Activated T-helper 2 cell treated with anti-CD3 and anti-CD28 coated beads, Interferon-gamma antibody, Interleukin-2, Interleukin-4, amounts not matched to agents 10 μg/mL and 5 μg/mL and 100 μg/mL, durations not matched to agents 14 hours and 24 hours and 36 hours (primary cell): ENCODE measurements at regions of chr1 and their contacts with region 1.

Region 1: DNA sequence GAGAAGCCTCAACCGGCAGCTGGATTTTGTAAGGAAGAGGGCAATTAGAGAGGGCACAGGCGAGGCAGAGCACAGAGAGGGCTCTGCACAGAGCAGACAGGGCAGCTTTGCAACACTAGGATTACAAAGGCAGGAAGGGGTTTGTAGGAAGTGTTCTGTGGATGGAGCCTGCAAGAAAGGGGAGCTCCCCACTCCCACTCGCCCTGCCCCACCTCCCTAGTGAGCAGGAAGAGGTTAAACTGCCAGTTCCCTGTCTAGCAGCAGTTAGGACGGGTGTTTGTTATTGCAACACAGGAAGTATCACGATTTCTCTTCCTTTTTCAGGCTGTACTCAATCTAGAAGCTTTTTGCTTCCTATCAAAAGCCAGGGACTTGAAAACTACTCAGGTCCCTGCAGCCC is 63.3 kb upstream of the LRRC8D start:
- DNase-seq: peak; percentile 57
- H3K4me3 Mint-ChIP-seq: peak overlapping the region; percentile 77
- H3K27ac Mint-ChIP-seq: peak overlapping the region; percentile 93
- H3K4me1 Mint-ChIP-seq: peaks cover 82% of the 10 kb centered on the region
- H3K27me3 Mint-ChIP-seq: no peaks in the 10 kb centered on the region

Region 2: GRCh38 chr1:89538361-89538760 is 219.2 kb before region 1 on chr1:
- intact Hi-C with region 1: loop called (anchors 5 kb)
- DNase-seq: no peak
- H3K4me3 Mint-ChIP-seq: no peak overlapping the region
- H3K27ac Mint-ChIP-seq: peak overlapping the region; percentile 79
- H3K4me1 Mint-ChIP-seq: peaks cover 66% of the 10 kb centered on the region
- H3K27me3 Mint-ChIP-seq: no peaks in the 10 kb centered on the region

Region 3: DNA sequence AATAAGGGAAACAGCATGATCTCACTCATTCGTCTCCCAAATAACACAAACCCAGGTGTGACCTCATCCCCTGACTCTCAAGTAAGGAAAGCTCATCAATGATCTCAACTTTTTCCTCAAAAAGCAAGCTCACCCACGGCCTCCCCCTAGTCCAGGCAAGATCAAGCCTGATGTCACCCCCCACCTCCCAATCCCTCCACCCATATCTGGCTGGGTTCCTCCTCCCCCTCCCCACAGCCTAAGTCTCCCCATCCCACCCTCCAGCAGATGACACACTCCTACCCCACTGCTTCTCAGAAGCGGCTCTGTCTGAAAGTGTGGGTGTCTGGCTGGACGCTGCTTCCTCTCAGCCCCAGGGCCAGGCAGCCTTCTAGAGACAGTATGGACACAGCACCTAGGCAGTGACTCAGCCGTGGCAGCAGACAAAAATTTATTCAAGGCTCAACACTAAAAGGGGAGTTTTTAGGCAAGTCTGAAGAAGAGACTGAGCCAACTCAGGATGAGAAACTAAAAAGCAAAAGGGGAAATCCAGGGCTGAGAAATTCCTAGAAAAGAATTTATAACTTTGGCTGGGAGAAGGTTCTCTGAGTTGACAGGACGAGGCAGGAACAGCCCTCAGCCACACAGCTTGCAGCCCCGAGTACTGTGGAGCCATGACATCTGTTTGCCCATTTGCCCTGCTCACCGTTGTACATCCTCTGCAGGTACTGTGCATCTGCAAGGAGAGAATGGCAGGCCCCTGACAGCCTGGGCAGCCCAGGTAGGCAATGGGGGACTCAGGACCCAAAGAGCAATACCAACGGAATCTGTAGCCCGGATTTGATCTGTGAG is 18.3 kb before region 1 on chr1:
- intact Hi-C with region 1: loop called (anchors 1 kb)
- DNase-seq: no peak
- H3K4me3 Mint-ChIP-seq: peak overlapping the region; percentile 74
- H3K27ac Mint-ChIP-seq: peak overlapping the region; percentile 94
- H3K4me1 Mint-ChIP-seq: peaks cover 40% of the 10 kb centered on the region
- H3K27me3 Mint-ChIP-seq: no peaks in the 10 kb centered on the region